Activated CD4-positive, alpha-beta T cell treated with anti-CD3 and anti-CD28 coated beads, Interleukin-2, amount 10 ng/mL, durations not matched to agents 7 days and 5 days (primary cell): ENCODE measurements at regions of chr9 and their contacts with region 1.

Region 1: GRCh38 chr9:91775011-91775707 is 174.9 kb downstream of the ROR2 start:
- DNase-seq: peak; percentile 73
- H3K4me3 Mint-ChIP-seq: no peak overlapping the region
- H3K27ac Mint-ChIP-seq: no peak overlapping the region
- H3K4me1 Mint-ChIP-seq: no peaks in the 10 kb centered on the region
- H3K27me3 Mint-ChIP-seq: peaks cover 18% of the 10 kb centered on the region

Region 2: GRCh38 chr9:91785447-91785842 is 10.3 kb after region 1 on chr9:
- CTCF ChIA-PET with region 1: no interaction called
- POLR2A ChIA-PET with region 1: no interaction called
- DNase-seq: no peak
- H3K4me3 Mint-ChIP-seq: no peak overlapping the region
- H3K27ac Mint-ChIP-seq: no peak overlapping the region
- H3K4me1 Mint-ChIP-seq: peaks cover 16% of the 10 kb centered on the region
- H3K27me3 Mint-ChIP-seq: peaks cover 13% of the 10 kb centered on the region

Region 3: GRCh38 chr9:91949946-91950664 is 174.9 kb after region 1 on chr9 and contains the start of gene ROR2:
- CTCF ChIA-PET with region 1: interaction called, 11 read pairs
- POLR2A ChIA-PET with region 1: no interaction called
- DNase-seq: peak; percentile 61
- H3K4me3 Mint-ChIP-seq: peak within 1 kb of the TSS; percentile 66
- H3K27ac Mint-ChIP-seq: peak within 1 kb of the TSS; percentile 63
- H3K4me1 Mint-ChIP-seq: peaks cover 9% of the 10 kb centered on the region
- H3K27me3 Mint-ChIP-seq: peaks cover 72% of the 10 kb centered on the region
- total RNA-seq, gene ROR2: 0.48 to 0.55 TPM